Prostate gland (tissue), 2 donors: ENCODE measurements at regions of chr10 and their contacts with region 1.

Region 1: DNA sequence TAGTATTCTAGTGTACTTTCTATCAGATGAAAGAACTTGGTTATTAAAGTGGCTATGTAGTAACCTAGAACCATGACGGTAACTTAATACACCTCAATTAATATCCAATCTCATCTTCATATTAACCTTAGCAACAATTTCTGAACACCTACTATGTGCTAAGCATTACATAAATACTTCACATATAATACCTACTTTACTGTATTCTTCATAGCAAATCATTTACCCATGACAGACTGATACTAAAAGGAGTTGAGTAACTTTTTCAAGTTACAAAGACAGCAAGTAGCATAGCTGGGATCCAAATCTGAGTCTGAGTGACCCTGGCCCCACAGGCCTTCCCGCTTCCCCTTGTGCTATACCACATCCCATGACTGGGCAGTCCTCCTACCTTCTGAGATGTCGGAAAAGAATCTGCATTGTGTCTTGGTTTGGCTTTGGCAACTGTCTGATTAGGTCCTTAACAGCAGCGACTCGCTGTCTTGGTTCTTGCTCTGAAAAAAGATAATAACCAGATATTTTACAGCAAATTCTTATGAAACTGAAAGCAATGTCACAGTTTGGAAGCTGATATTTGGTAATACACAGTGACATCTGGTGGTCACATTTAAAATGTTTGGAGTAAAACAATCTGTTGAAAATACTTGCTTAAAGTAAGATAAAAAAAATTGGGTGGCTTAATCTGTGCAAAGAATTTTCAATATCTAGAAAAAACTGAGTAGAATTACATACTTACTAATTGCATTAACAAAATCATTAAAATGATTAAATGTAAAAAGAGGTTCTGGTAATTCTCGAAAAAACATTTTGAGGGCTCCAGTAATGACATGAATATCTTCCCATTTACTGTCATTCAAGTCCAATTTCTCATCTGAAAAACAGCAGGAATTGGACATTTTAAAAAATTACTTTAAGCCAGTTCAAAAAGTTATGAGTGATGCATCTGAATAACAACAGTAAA is 120.1 kb downstream of the ARHGAP12 start:
- DNase-seq: no peak
- H3K4me3 ChIP-seq: no peak overlapping the region
- H3K27ac ChIP-seq: peak overlapping the region; percentile 19 to 47
- H3K4me1 ChIP-seq: no peaks in the 10 kb centered on the region
- H3K27me3 ChIP-seq: no peaks in the 10 kb centered on the region
- CTCF ChIP-seq: peak; percentile 18 to 74 (median 62)
- POLR2A ChIP-seq: no peak

Region 2: GRCh38 chr10:30727524-30727923 is 1081.0 kb before region 1 on chr10:
- intact Hi-C with region 1: loop called (anchors 5 kb)
- DNase-seq: no peak
- H3K4me3 ChIP-seq: no peak overlapping the region
- H3K27ac ChIP-seq: no peak overlapping the region
- H3K4me1 ChIP-seq: no peaks in the 10 kb centered on the region
- H3K27me3 ChIP-seq: no peaks in the 10 kb centered on the region
- CTCF ChIP-seq: no peak
- POLR2A ChIP-seq: no peak

Region 3: DNA sequence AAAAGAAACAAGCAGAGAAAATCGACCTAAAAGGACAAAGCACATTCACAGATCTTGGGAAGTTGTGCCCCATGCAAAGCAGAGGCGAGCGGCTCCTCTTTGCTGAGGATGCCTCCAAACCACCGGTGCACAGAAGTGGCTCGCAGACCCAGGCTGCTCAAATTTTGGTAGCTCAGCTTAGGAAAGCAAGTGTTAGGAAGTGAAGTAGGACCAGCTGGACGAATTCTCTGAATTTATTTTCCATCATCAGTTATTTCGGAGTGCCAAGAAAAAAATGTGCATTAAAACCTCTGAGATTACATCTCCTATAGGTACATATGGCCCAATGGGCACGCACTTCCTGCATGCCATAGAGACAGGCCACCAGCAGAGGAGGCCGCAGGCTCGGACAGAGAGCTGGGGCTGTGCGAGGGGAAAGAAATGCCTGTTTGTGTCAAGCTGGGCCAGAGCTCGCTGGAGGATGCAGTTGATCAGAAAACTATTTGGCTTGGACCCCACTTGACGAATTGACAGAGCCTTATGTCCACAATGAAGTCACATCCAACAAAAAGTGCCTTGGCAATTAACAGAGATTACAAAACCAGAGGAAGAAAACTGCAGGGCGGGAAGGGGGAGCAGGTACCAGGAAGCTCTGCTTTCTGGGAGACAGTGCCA is 1056.7 kb before region 1 on chr10:
- intact Hi-C with region 1: loop called (anchors 5 kb)
- DNase-seq: peak; percentile 31
- H3K4me3 ChIP-seq: no peak overlapping the region
- H3K27ac ChIP-seq: no peak overlapping the region
- H3K4me1 ChIP-seq: no peaks in the 10 kb centered on the region
- H3K27me3 ChIP-seq: no peaks in the 10 kb centered on the region
- CTCF ChIP-seq: peak in 3 of 4 experiments; percentile 42 to 86 (median 71)
- POLR2A ChIP-seq: no peak

Region 4: DNA sequence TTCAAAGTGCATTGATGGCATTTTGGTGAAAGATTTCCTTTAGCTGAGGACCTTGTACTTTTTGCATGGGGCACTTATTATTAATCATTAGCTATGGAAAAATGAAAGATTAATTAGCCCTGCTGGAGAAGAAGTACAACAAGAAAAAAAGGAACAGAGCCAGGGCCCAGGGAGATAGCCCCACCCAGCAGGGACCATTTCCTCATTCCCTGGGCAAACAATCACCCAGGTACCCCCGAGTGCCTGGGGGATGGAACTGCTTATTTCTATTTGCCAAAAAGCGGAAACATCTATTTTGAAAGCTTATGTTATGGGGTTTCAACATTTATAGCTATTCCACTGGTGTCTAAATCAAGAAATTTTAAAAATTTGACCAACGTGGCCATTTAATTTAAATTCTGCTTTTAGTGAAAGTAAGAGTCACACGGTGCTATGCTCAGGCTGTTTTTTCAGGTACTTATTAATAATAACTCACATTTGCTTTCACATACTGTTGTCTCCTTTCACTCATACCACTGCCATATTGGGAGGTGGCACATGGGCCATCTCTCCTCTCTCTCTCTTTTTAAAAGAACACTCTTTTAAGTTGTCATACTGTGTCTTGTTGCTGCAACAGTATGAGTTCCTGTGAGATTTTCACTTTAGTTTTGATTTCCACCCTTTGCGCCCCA is 391.3 kb after region 1 on chr10:
- intact Hi-C with region 1: no loop called
- DNase-seq: no peak
- H3K4me3 ChIP-seq: no peak overlapping the region
- H3K27ac ChIP-seq: no peak overlapping the region
- H3K4me1 ChIP-seq: no peaks in the 10 kb centered on the region
- H3K27me3 ChIP-seq: no peaks in the 10 kb centered on the region
- CTCF ChIP-seq: no peak
- POLR2A ChIP-seq: no peak